ENCODE measurements at regions of chr20 and their contacts with region 1.

Region 1: DNA sequence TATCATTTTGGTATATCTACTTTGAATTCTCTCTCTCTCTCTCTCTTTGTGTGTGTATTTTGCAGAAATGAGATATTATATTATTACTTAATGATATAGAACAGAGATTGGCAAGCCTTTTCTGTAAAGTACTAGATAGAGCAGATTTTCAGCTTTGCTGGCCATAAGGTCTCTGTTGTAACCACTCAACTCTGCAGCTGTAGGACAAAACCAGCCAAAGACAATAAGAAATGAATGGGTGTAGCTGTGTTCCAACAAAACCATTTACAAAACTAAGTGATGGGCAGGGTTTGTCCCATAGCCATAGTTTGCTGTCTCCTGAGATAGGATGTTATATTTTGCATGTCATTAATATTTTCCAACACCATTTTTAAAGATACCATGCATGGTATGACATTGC is 91.2 kb upstream of the TSHZ2 start:
- DNase-seq: no peak
- ATAC-seq: no peak
- H3K4me3 ChIP-seq: no peak overlapping the region
- H3K4me3 Mint-ChIP-seq: no peak overlapping the region
- H3K27ac ChIP-seq: no peak overlapping the region
- H3K27ac Mint-ChIP-seq: no peak overlapping the region
- H3K4me1 ChIP-seq: no peaks in the 10 kb centered on the region
- H3K4me1 Mint-ChIP-seq: no peaks in the 10 kb centered on the region
- H3K27me3 ChIP-seq: no peaks in the 10 kb centered on the region
- H3K27me3 Mint-ChIP-seq: peaks cover 7% of the 10 kb centered on the region
- CTCF ChIP-seq: no peak

Region 2: GRCh38 chr20:52731106-52731505 is 149.9 kb before region 1 on chr20:
- CTCF ChIA-PET with region 1: no interaction called
- POLR2A ChIA-PET with region 1: no interaction called
- intact Hi-C with region 1: no loop called
- DNase-seq: no peak
- ATAC-seq: no peak
- H3K4me3 ChIP-seq: no peak overlapping the region
- H3K4me3 Mint-ChIP-seq: no peak overlapping the region
- H3K27ac ChIP-seq: no peak overlapping the region
- H3K27ac Mint-ChIP-seq: no peak overlapping the region
- H3K4me1 ChIP-seq: no peaks in the 10 kb centered on the region
- H3K4me1 Mint-ChIP-seq: no peaks in the 10 kb centered on the region
- H3K27me3 ChIP-seq: no peaks in the 10 kb centered on the region
- H3K27me3 Mint-ChIP-seq: peaks cover 2% of the 10 kb centered on the region
- CTCF ChIP-seq: no peak

Region 3: DNA sequence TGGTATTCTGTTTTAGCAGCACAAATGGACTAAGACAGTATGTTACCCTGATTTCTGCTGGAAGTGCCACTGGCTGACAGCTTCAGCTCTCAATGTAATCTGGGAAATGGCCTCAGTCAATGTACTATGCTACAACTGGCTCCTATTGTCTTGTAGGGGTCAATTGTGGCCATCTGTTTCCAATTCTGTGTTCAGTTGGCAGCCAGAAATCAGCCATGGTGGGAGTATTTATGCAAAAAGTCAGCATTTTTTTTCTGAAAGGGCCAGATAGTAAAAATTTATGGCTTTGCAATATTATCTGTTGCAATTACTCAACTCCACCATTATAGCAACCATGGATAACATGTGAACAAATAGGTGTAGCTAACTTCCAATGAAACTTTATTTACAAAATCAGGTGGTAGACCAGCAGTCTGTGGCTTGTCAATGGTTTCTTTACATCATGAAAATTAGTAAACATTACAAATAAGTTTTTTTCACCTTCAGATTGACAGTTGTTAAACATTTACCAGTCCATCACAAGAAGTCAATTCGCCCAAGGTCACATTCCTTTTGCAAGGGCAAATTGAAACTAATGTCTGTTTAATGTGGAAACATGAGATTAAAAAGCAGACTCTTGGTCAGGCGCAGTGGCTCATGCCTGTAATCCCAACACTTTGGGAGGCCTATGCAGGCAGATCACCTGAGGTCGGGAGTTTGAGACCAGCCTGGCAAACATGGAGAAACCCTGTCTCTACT is 32.8 kb after region 1 on chr20:
- CTCF ChIA-PET with region 1: no interaction called
- POLR2A ChIA-PET with region 1: no interaction called
- intact Hi-C with region 1: loop called in 1 of 2 experiments (anchors 1 kb)
- DNase-seq: no peak
- ATAC-seq: no peak
- H3K4me3 ChIP-seq: no peak overlapping the region
- H3K4me3 Mint-ChIP-seq: no peak overlapping the region
- H3K27ac ChIP-seq: no peak overlapping the region
- H3K27ac Mint-ChIP-seq: no peak overlapping the region
- H3K4me1 ChIP-seq: no peaks in the 10 kb centered on the region
- H3K4me1 Mint-ChIP-seq: no peaks in the 10 kb centered on the region
- H3K27me3 ChIP-seq: peaks cover 0 to 2% of the 10 kb centered on the region in 2 experiments
- H3K27me3 Mint-ChIP-seq: peaks cover 9% of the 10 kb centered on the region
- CTCF ChIP-seq: no peak

Region 4: GRCh38 chr20:52959125-52959524 is 78.1 kb after region 1 on chr20:
- CTCF ChIA-PET with region 1: no interaction called
- POLR2A ChIA-PET with region 1: no interaction called
- intact Hi-C with region 1: no loop called
- DNase-seq: peak in 1 of 9 experiments; percentile 7
- ATAC-seq: no peak
- H3K4me3 ChIP-seq: no peak overlapping the region
- H3K4me3 Mint-ChIP-seq: no peak overlapping the region
- H3K27ac ChIP-seq: no peak overlapping the region
- H3K27ac Mint-ChIP-seq: no peak overlapping the region
- H3K4me1 ChIP-seq: no peaks in the 10 kb centered on the region
- H3K4me1 Mint-ChIP-seq: no peaks in the 10 kb centered on the region
- H3K27me3 ChIP-seq: no peaks in the 10 kb centered on the region
- H3K27me3 Mint-ChIP-seq: peaks cover 18% of the 10 kb centered on the region
- CTCF ChIP-seq: no peak

Region 5: DNA sequence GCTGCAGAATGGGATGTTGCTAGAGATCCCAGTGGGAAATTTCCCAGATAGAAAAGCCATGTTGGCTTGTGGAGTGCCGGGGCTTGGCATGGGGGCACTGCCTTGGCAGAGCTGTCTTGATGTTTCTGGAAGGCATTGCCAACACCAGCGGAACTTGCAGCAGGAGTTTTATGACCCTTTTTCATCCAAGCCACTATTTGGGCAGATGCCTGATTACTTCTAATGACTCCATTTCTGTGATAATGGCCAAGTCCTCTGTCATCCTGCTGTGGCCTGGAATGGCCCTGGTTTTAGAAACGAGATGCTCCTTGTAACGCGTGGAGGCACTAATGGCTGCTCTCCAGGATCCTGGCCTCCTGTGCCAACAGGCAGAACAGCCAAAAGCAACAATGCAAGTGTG is 483.6 kb after region 1 on chr20:
- CTCF ChIA-PET with region 1: no interaction called
- POLR2A ChIA-PET with region 1: no interaction called
- intact Hi-C with region 1: no loop called
- DNase-seq: no peak
- ATAC-seq: no peak
- H3K4me3 ChIP-seq: no peak overlapping the region
- H3K4me3 Mint-ChIP-seq: no peak overlapping the region
- H3K27ac ChIP-seq: no peak overlapping the region
- H3K27ac Mint-ChIP-seq: no peak overlapping the region
- H3K4me1 ChIP-seq: no peaks in the 10 kb centered on the region
- H3K4me1 Mint-ChIP-seq: no peaks in the 10 kb centered on the region
- H3K27me3 ChIP-seq: no peaks in the 10 kb centered on the region
- H3K27me3 Mint-ChIP-seq: no peaks in the 10 kb centered on the region
- CTCF ChIP-seq: no peak

Region 6: GRCh38 chr20:53559816-53560215 is 678.8 kb after region 1 on chr20:
- CTCF ChIA-PET with region 1: no interaction called
- POLR2A ChIA-PET with region 1: no interaction called
- intact Hi-C with region 1: no loop called
- DNase-seq: no peak
- ATAC-seq: no peak
- H3K4me3 ChIP-seq: no peak overlapping the region
- H3K4me3 Mint-ChIP-seq: no peak overlapping the region
- H3K27ac ChIP-seq: no peak overlapping the region
- H3K27ac Mint-ChIP-seq: no peak overlapping the region
- H3K4me1 ChIP-seq: peaks cover 4% of the 10 kb centered on the region
- H3K4me1 Mint-ChIP-seq: peaks cover 4% of the 10 kb centered on the region
- H3K27me3 ChIP-seq: no peaks in the 10 kb centered on the region
- H3K27me3 Mint-ChIP-seq: no peaks in the 10 kb centered on the region
- CTCF ChIP-seq: no peak